ENCODE measurements at regions of chr7 and their contacts with region 1.

Region 1: GRCh38 chr7:127745445-127745844 is 93.5 kb downstream of the SND1 start:
- DNase-seq: peak; percentile 11
- H3K4me3 Mint-ChIP-seq: no peak overlapping the region
- H3K27ac Mint-ChIP-seq: peak overlapping the region; percentile 57
- H3K4me1 Mint-ChIP-seq: peaks cover 58% of the 10 kb centered on the region
- H3K27me3 Mint-ChIP-seq: no peaks in the 10 kb centered on the region

Region 2: DNA sequence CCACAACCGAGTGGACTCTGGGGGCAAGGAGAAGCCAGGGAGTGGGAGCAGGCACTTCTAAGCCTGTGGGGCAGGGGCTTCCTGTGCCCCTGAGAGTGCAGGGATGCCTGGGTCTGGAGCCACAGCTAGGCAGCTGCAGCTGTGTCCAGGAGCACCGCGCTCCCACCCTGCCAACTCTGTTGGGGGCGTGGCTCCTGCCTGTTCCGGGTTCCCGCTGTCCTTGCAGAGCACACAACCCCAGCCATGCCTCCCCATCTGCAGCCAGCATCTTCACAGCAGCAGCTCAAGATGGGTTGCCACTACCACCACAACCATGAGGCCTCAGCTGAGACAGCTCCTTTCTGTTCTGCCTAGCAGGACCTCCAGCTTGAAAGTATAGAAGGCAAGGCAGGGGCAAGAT is 136.1 kb before region 1 on chr7:
- CTCF ChIA-PET with region 1: no interaction called
- POLR2A ChIA-PET with region 1: no interaction called
- intact Hi-C with region 1: no loop called
- DNase-seq: no peak
- H3K4me3 Mint-ChIP-seq: no peak overlapping the region
- H3K27ac Mint-ChIP-seq: no peak overlapping the region
- H3K4me1 Mint-ChIP-seq: no peaks in the 10 kb centered on the region
- H3K27me3 Mint-ChIP-seq: peaks cover 17% of the 10 kb centered on the region

Region 3: DNA sequence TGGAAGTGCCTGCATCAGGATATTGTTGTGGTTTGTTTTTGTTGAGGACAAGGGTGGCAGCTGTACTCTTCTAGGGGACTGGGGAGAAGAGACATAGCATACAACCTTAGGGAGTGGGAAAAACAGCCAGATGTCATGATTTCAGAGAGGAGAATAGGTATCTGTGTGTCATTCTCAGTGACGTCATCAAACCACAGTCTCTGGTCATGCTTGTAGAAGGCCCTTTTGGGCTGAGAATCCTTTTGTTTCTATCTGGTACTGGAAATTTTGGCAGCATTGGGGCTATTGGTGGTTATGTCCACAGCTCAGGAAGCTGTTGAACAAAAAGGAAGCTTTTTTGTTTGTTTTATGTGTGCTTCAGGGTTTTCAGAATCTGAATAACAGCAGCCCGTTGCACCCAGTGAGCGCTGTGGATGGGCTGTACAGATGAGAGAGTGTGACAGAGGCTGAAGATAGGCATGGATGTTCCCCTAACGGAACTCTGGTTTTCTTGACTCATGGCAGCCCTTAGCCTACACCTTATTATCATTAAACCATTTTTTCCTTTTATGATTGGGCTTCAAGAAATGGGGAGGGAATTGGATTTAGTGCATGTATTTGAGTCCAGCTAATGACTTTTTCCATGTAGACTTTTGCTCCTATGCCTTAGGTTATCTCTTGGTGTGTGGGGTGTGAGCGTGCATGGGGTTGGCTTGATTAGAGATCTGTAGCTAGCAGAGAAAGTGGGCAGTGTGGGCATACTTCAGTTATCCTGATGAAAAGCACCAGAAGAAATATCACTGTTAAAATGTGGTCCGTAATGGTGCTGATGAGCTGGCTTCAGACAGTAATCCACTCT is 27.7 kb before region 1 on chr7:
- CTCF ChIA-PET with region 1: no interaction called
- POLR2A ChIA-PET with region 1: no interaction called
- intact Hi-C with region 1: no loop called
- DNase-seq: no peak
- H3K4me3 Mint-ChIP-seq: no peak overlapping the region
- H3K27ac Mint-ChIP-seq: peak overlapping the region; percentile 7
- H3K4me1 Mint-ChIP-seq: peaks cover 25% of the 10 kb centered on the region
- H3K27me3 Mint-ChIP-seq: no peaks in the 10 kb centered on the region

Region 4: GRCh38 chr7:127755521-127755920 is 10.1 kb after region 1 on chr7:
- CTCF ChIA-PET with region 1: no interaction called
- POLR2A ChIA-PET with region 1: no interaction called
- intact Hi-C with region 1: no loop called
- DNase-seq: no peak
- H3K4me3 Mint-ChIP-seq: no peak overlapping the region
- H3K27ac Mint-ChIP-seq: no peak overlapping the region
- H3K4me1 Mint-ChIP-seq: peaks cover 48% of the 10 kb centered on the region
- H3K27me3 Mint-ChIP-seq: no peaks in the 10 kb centered on the region

Region 5: DNA sequence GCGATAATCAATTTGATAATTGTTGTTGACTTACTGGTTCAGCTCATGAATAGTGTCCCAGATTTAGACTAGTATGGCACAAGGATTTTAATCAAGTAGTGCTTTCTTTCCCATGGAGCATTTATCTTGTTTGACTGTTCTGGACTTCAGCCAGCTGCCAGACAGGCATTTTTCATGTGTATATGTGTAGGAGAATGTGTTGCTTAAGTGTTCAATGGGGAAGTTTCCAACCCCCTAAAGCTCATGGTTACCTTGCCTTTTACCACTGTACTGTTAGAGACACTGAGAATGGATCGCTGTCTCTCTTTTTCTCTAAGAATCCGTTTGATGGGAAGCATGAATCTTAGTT is 181.9 kb after region 1 on chr7:
- CTCF ChIA-PET with region 1: no interaction called
- POLR2A ChIA-PET with region 1: no interaction called
- intact Hi-C with region 1: loop called (anchors 5 kb)
- DNase-seq: no peak
- H3K4me3 Mint-ChIP-seq: no peak overlapping the region
- H3K27ac Mint-ChIP-seq: no peak overlapping the region
- H3K4me1 Mint-ChIP-seq: peaks cover 14% of the 10 kb centered on the region
- H3K27me3 Mint-ChIP-seq: no peaks in the 10 kb centered on the region